Heart right ventricle (tissue), 16 donors: ENCODE measurements at regions of chrX and their contacts with region 1.

Region 1: DNA sequence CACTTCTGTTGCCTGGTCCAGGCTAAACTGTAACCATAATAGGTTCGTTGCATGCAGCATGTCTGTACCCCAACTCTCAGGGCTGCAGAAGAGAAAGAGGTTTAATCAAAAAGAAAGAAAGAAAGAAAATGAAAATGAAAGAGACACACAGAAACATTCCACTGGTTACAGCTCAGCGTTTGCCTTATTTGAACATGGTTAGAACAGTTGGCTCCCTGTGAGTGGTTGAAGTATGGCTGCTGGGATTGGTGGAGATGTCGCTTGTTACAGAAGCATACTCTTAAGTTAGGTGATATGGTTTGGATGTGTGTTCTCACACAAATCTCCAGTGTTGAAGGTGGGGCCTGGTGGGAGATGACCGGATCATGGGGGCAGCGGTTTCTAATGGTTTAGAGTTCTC is 36.3 kb downstream of the ARSD start:
- DNase-seq: no peak
- ATAC-seq: no peak
- H3K4me3 ChIP-seq: no peak overlapping the region
- H3K27ac ChIP-seq: no peak overlapping the region
- H3K4me1 ChIP-seq: peaks cover 0 to 27% (median 0%) of the 10 kb centered on the region in 9 donors
- H3K27me3 ChIP-seq: peaks cover 0 to 4% (median 0%) of the 10 kb centered on the region in 7 donors
- CTCF ChIP-seq: no peak

Region 2: GRCh38 chrX:2774057-2774456 is 118.8 kb before region 1 on chrX:
- intact Hi-C with region 1: loop called in 1 of 10 experiments (anchors 2 kb)
- DNase-seq: no peak
- ATAC-seq: no peak
- H3K4me3 ChIP-seq: no peak overlapping the region
- H3K27ac ChIP-seq: no peak overlapping the region
- H3K4me1 ChIP-seq: no peaks in the 10 kb centered on the region
- H3K27me3 ChIP-seq: peaks cover 0 to 12% (median 7%) of the 10 kb centered on the region in 7 donors
- CTCF ChIP-seq: no peak

Region 3: DNA sequence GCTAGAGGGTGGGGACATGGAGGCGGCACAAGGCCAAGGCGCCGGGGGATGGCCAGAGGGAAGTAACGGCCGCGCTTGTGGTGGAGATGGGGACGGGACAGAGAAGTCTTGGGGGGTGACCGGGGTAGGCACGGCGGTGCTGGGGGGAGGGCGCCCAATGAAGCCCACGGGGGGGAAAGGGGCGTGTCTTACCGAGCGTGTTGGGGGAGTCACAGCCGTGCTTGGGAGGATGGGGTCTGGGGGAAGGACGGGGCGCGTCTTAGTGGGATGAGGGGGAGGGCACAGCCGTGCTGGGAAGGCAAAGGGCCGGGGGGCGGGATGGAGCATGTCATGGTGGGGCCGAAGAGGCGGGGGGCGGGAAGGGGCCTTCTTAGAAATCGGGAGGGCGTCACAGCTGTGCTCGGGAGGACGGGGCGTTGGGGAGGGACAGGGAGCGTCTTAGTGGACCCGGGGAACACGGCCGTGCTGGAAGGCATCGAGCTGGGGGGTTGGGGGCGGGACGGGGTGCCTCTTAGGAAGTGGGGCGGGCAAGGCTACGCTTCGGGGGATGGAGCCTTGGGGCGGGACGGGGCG is 35.5 kb after region 1 on chrX:
- intact Hi-C with region 1: no loop called
- DNase-seq: peak; percentile 34 to 58
- ATAC-seq: peak; percentile 31 to 69 (median 50)
- H3K4me3 ChIP-seq: peak overlapping the region in 9 of 10 donors; percentile 55 to 93 (median 68)
- H3K27ac ChIP-seq: peak overlapping the region in 9 of 10 donors; percentile 52 to 99 (median 95)
- H3K4me1 ChIP-seq: peaks cover 0 to 8% (median 0%) of the 10 kb centered on the region in 9 donors
- H3K27me3 ChIP-seq: peaks cover 0 to 13% (median 0%) of the 10 kb centered on the region in 7 donors
- CTCF ChIP-seq: no peak